HepG2 (cell line): ENCODE measurements at regions of chr4 and their contacts with region 1.

Region 1: GRCh38 chr4:82462415-82462831 is 32.0 kb downstream of the ENOPH1 start:
- DNase-seq: peak; percentile 73
- ATAC-seq: peak; percentile 81
- H3K4me3 ChIP-seq: no peak overlapping the region
- H3K27ac ChIP-seq: no peak overlapping the region
- H3K4me1 ChIP-seq: peaks cover 4% of the 10 kb centered on the region
- H3K27me3 ChIP-seq: no peaks in the 10 kb centered on the region
- CTCF ChIP-seq: peak; percentile 76
- EP300 ChIP-seq: no peak
- POLR2A ChIP-seq: no peak
- RAD21 ChIP-seq: peak; percentile 41; the same call in 1 of the 2 replicates

Region 2: DNA sequence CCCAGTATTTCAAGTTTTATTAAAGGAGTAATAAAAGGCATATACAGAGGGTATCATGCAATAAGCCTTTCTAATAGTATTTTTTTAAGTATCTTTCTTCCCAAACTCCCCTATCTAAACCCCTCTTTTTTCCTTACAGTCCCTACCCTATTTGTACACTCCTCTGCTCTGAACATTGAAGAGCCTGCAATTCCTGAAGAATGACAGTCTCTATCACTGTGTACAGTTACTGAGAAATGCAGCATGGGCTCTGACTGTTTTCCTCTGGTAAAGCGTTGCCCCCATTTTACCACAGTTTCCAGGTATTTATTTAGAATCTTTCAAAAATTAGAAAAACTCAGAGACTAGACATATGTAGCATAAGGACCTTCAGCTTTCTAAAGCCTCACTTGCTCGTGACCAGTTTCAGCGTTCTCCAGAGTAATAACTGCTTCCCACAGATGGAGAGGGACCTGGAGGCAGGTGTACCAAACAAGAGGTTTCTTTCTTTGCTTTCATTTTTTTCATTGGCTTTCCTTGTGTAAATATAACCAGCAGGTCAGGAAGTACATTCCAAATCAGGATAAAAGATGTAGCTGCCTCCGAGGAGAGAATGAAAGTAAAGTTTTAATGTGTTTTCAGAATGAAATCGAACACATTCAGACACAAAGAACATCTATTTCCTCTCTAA is 1896.1 kb before region 1 on chr4:
- CTCF ChIA-PET with region 1: no interaction called
- POLR2A ChIA-PET with region 1: no interaction called
- in situ Hi-C with region 1: no loop called
- intact Hi-C with region 1: no loop called
- DNase-seq: no peak
- ATAC-seq: no peak
- H3K4me3 ChIP-seq: no peak overlapping the region
- H3K27ac ChIP-seq: no peak overlapping the region
- H3K4me1 ChIP-seq: no peaks in the 10 kb centered on the region
- H3K27me3 ChIP-seq: no peaks in the 10 kb centered on the region
- CTCF ChIP-seq: no peak
- EP300 ChIP-seq: no peak
- POLR2A ChIP-seq: no peak
- RAD21 ChIP-seq: no peak

Region 3: DNA sequence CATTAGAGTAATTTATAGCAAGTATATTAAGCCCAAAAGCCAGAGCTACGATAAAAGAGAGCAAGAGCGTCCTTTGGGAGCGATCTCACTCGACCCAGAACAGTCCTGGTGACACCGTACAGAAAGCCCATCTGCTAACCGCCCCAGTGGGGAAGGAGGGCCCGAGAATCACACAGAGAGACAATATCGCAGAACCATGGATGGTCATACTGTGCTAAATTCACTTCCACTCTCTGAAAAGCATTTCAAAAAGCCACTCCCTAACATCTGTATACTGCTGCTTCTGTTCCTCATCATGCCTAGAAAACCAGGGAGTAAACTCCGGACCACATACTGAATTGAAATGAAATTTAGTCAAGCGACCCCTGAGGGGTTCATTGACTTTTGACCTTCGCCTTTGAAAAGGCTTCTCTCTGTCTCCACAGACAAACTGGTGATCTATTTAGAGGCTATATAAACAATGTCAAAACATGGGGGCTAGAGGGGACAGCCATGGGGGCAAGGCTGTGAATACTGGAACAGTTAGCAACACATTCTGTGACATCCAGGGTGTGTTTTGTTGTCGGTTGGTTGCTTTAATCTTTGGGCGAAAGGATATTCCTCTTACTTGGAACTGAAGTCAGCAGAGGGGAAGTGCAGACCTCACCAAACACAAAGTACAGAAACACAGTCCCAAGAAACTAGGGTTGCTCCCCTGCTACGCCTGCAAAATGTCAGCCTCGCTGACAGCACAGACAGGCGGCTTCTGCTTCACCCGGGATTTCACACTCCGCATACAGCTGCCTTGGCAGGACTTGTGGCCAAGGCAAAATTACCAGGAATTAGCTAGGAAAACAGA is 861.7 kb before region 1 on chr4:
- CTCF ChIA-PET with region 1: no interaction called
- POLR2A ChIA-PET with region 1: no interaction called
- in situ Hi-C with region 1: no loop called
- intact Hi-C with region 1: no loop called
- DNase-seq: no peak
- ATAC-seq: peak; percentile 86
- H3K4me3 ChIP-seq: no peak overlapping the region
- H3K27ac ChIP-seq: no peak overlapping the region
- H3K4me1 ChIP-seq: peaks cover 8% of the 10 kb centered on the region; the same call in 1 of the 2 replicates
- H3K27me3 ChIP-seq: no peaks in the 10 kb centered on the region; a peak in 1 of 5 replicates
- CTCF ChIP-seq: no peak
- EP300 ChIP-seq: no peak
- POLR2A ChIP-seq: no peak
- RAD21 ChIP-seq: no peak

Region 4: DNA sequence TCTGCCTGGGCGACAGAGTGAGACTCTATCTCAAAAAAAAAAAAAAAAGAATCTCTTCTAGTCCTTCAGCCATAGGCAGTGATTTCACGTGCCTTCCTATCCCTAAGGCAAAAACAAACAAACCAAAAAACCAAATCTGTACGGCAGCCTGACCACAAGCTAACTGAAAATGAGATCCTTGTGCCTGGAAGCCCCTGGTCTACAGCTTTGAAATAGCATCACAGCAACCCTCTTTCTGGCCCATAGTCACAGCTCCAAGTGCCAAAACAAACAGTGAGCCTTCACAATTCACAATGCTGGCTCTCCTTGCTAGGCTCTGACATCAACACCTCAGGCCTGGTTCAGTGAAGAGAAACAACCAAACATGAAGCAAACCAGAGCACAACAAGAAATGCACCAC is 53.3 kb after region 1 on chr4:
- CTCF ChIA-PET with region 1: no interaction called
- POLR2A ChIA-PET with region 1: no interaction called
- in situ Hi-C with region 1: no loop called
- intact Hi-C with region 1: no loop called
- DNase-seq: no peak
- ATAC-seq: no peak
- H3K4me3 ChIP-seq: no peak overlapping the region
- H3K27ac ChIP-seq: no peak overlapping the region
- H3K4me1 ChIP-seq: no peaks in the 10 kb centered on the region
- H3K27me3 ChIP-seq: no peaks in the 10 kb centered on the region; a peak in 1 of 5 replicates
- CTCF ChIP-seq: no peak
- EP300 ChIP-seq: no peak
- POLR2A ChIP-seq: no peak
- RAD21 ChIP-seq: no peak

Region 5: GRCh38 chr4:82561745-82562515 is 99.5 kb after region 1 on chr4 and contains the start of gene TMEM150C:
- CTCF ChIA-PET with region 1: no interaction called
- POLR2A ChIA-PET with region 1: no interaction called
- in situ Hi-C with region 1: no loop called
- intact Hi-C with region 1: loop called (anchors 5 kb)
- DNase-seq: no peak
- ATAC-seq: peak; percentile 85
- H3K4me3 ChIP-seq: peak within 1 kb of the TSS; percentile 52 to 76 (median 65)
- H3K27ac ChIP-seq: no peak within 1 kb of the TSS
- H3K4me1 ChIP-seq: peaks cover 14% of the 10 kb centered on the region
- H3K27me3 ChIP-seq: peaks cover 5 to 29% of the 10 kb centered on the region in 2 experiments; a peak in 3 of 5 replicates
- CTCF ChIP-seq: peak; percentile 21; the same call in 1 of the 2 replicates
- EP300 ChIP-seq: no peak
- POLR2A ChIP-seq: no peak
- RAD21 ChIP-seq: no peak; the same call in 1 of the 2 replicates
- total RNA-seq, gene TMEM150C: 0.11 and 0.42 TPM in 2 replicates

Region 6: GRCh38 chr4:82578935-82579334 is 116.5 kb after region 1 on chr4:
- CTCF ChIA-PET with region 1: no interaction called
- POLR2A ChIA-PET with region 1: no interaction called
- in situ Hi-C with region 1: no loop called
- intact Hi-C with region 1: loop called (anchors 5 kb)
- DNase-seq: no peak
- ATAC-seq: peak; percentile 100
- H3K4me3 ChIP-seq: no peak overlapping the region
- H3K27ac ChIP-seq: no peak overlapping the region
- H3K4me1 ChIP-seq: peaks cover 11% of the 10 kb centered on the region
- H3K27me3 ChIP-seq: peaks cover 0 to 2% of the 10 kb centered on the region in 2 experiments; a peak in 1 of 5 replicates
- CTCF ChIP-seq: 0 out of 2 replicates have a peak, but pooled peaks have one; percentile 30
- EP300 ChIP-seq: no peak
- POLR2A ChIP-seq: no peak
- RAD21 ChIP-seq: no peak

Region 7: GRCh38 chr4:82599336-82599735 is 136.9 kb after region 1 on chr4:
- CTCF ChIA-PET with region 1: interaction called, 17 read pairs
- POLR2A ChIA-PET with region 1: no interaction called
- in situ Hi-C with region 1: loop called (anchors 5 kb)
- intact Hi-C with region 1: loop called (anchors 1 kb)
- DNase-seq: peak; percentile 51
- ATAC-seq: peak; percentile 98
- H3K4me3 ChIP-seq: no peak overlapping the region
- H3K27ac ChIP-seq: no peak overlapping the region
- H3K4me1 ChIP-seq: no peaks in the 10 kb centered on the region
- H3K27me3 ChIP-seq: peaks cover 0 to 3% of the 10 kb centered on the region in 2 experiments; a peak in 1 of 5 replicates
- CTCF ChIP-seq: peak; percentile 79
- EP300 ChIP-seq: no peak
- POLR2A ChIP-seq: no peak
- RAD21 ChIP-seq: peak; percentile 58

Region 8: GRCh38 chr4:82739316-82740179 is 277.1 kb after region 1 on chr4:
- CTCF ChIA-PET with region 1: interaction called, 53 read pairs
- POLR2A ChIA-PET with region 1: interaction called, 3 read pairs
- in situ Hi-C with region 1: loop called (anchors 5 kb)
- intact Hi-C with region 1: loop called (anchors 1 kb)
- DNase-seq: peak; percentile 58
- ATAC-seq: peak; percentile 96
- H3K4me3 ChIP-seq: no peak overlapping the region
- H3K27ac ChIP-seq: no peak overlapping the region
- H3K4me1 ChIP-seq: peaks cover 26% of the 10 kb centered on the region
- H3K27me3 ChIP-seq: no peaks in the 10 kb centered on the region; a peak in 1 of 5 replicates
- CTCF ChIP-seq: peak; percentile 99
- EP300 ChIP-seq: no peak
- POLR2A ChIP-seq: no peak
- RAD21 ChIP-seq: peak; percentile 97